HepG2 (cell line): ENCODE measurements at regions of chr14 and their contacts with region 1.

Region 1: DNA sequence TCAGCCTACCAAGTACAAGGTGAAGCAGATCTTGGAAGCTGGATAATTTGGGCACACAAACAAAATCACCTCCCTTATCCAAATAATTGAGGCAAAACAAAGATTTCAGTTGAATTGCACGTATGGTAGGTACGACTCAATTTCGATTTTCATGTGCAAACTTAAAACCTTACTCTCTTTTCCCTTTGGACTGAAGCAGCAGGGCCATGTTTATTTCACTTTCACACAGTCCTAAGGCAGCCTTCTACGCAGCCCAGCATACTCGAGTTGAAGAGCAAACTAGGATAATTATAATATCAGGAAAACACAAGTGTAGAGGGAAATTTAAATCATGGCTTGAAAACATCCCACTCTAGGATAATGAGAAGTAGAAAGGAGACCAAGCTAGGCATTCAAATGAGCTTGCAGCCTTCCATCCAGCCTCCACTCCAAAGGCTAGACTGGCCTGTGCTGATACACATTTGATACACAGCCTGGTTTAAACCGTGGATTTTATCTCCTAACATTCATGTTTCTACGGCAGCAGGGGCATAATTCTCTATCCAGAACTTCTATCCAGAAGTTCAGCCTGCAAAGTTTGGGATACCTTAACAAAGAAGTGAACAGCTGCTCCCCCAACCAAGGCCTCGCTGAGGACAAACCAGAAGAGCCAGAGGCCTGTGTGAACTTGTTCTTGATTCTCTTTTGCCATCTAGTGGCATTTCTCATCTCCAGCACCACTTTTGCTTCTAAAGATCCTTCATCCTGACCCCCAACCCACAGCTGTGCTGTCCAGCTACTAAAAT is 2.4 kb upstream of the RNASE7 start:
- DNase-seq: peak; percentile 85
- ATAC-seq: peak; percentile 78
- H3K4me3 ChIP-seq: peak overlapping the region in 2 of 3 experiments; percentile 20 to 42; a peak in 4 of 6 replicates
- H3K27ac ChIP-seq: peak overlapping the region; percentile 22
- H3K4me1 ChIP-seq: peaks cover 76% of the 10 kb centered on the region
- H3K27me3 ChIP-seq: no peaks in the 10 kb centered on the region; a peak in 1 of 5 replicates
- CTCF ChIP-seq: peak; percentile 93
- EP300 ChIP-seq: no peak
- POLR2A ChIP-seq: no peak
- RAD21 ChIP-seq: peak; percentile 92

Region 2: GRCh38 chr14:20305265-20306078 is 734.3 kb before region 1 on chr14 and contains the start of gene TTC5:
- CTCF ChIA-PET with region 1: no interaction called
- POLR2A ChIA-PET with region 1: no interaction called
- in situ Hi-C with region 1: no loop called
- intact Hi-C with region 1: no loop called
- DNase-seq: peak; percentile 85
- ATAC-seq: peak; percentile 93
- H3K4me3 ChIP-seq: peak within 1 kb of the TSS; percentile 70 to 85 (median 77)
- H3K27ac ChIP-seq: peak within 1 kb of the TSS; percentile 16
- H3K4me1 ChIP-seq: peaks cover 26% of the 10 kb centered on the region
- H3K27me3 ChIP-seq: no peaks in the 10 kb centered on the region; a peak in 1 of 5 replicates
- CTCF ChIP-seq: peak; percentile 95
- EP300 ChIP-seq: peak in 1 of 2 experiments; percentile 34; a peak in 1 of 4 replicates
- POLR2A ChIP-seq: peak; percentile 60 to 69
- RAD21 ChIP-seq: peak; percentile 52
- total RNA-seq, gene TTC5: 28.5 and 44.6 TPM in 2 replicates

Region 3: DNA sequence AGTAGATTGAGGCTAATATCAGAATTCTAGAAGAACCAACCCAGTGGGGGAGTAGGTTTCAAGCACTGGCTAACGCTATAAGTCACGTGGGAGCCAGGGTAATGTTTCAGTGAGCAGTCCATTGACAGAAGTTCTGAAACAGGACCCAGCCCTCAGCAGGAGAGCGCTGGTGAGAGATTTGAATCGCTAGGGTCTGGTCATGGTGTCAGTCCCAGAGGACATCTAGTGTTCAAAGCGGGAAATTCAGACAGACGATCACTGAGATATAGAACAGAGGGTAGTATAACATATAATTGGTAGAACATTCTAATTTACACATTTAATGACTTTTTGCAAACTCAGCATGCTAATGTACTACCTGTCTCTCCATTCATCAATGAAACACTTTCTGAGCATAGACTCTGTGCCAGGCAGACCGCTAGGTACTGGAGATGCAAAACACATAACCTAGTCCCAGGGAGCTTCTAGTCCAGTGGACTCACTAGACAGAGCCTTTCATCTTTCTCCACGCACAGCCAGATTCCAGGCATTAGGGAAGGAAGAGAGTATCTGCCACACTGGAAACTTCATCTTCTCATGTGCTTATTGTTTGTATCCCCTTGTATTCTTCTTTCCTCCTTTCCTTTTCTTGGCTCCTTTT is 184.0 kb before region 1 on chr14:
- CTCF ChIA-PET with region 1: interaction called, 5 read pairs
- POLR2A ChIA-PET with region 1: no interaction called
- in situ Hi-C with region 1: loop called (anchors 5 kb)
- intact Hi-C with region 1: loop called (anchors 1 kb)
- DNase-seq: peak; percentile 79
- ATAC-seq: peak; percentile 98
- H3K4me3 ChIP-seq: no peak overlapping the region
- H3K27ac ChIP-seq: no peak overlapping the region
- H3K4me1 ChIP-seq: peaks cover 9% of the 10 kb centered on the region
- H3K27me3 ChIP-seq: 0 out of 5 replicates have a peak, but pooled peaks cover 0 to 6% of the 10 kb centered on the region in 2 experiments
- CTCF ChIP-seq: peak; percentile 86
- EP300 ChIP-seq: no peak
- POLR2A ChIP-seq: no peak
- RAD21 ChIP-seq: peak; percentile 62

Region 4: GRCh38 chr14:20956376-20956976 is 83.3 kb before region 1 on chr14:
- CTCF ChIA-PET with region 1: no interaction called
- POLR2A ChIA-PET with region 1: no interaction called
- in situ Hi-C with region 1: no loop called
- intact Hi-C with region 1: no loop called
- DNase-seq: no peak
- ATAC-seq: no peak
- H3K4me3 ChIP-seq: no peak overlapping the region
- H3K27ac ChIP-seq: no peak overlapping the region
- H3K4me1 ChIP-seq: peaks cover 34% of the 10 kb centered on the region
- H3K27me3 ChIP-seq: no peaks in the 10 kb centered on the region
- CTCF ChIP-seq: no peak
- EP300 ChIP-seq: no peak
- POLR2A ChIP-seq: no peak
- RAD21 ChIP-seq: no peak

Region 5: DNA sequence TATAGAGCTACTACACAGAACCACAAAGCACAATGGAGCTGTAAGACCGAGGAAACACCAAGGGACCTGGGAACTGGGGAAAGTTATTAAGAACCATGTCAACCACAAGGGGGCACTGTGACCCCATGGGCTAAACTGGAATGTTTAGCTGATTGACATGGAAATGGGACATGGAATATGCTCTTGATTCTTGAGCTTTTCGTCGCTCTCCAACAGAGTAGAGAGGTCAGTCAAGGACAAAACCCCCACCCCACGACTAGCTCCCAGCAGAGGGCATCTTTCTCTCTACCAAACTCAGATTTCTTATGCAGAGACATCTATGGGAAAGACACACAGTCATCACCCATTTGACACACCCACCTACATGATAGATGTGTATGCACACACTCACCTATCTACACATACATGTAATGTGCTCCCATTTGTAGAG is 25.0 kb before region 1 on chr14:
- CTCF ChIA-PET with region 1: interaction called, 109 read pairs
- POLR2A ChIA-PET with region 1: interaction called, 112 read pairs
- in situ Hi-C with region 1: no loop called
- intact Hi-C with region 1: loop called (anchors 1 kb)
- DNase-seq: peak; percentile 94
- ATAC-seq: peak; percentile 90
- H3K4me3 ChIP-seq: no peak overlapping the region
- H3K27ac ChIP-seq: no peak overlapping the region
- H3K4me1 ChIP-seq: peaks cover 36% of the 10 kb centered on the region
- H3K27me3 ChIP-seq: peaks cover 0 to 3% of the 10 kb centered on the region in 2 experiments; a peak in 1 of 5 replicates
- CTCF ChIP-seq: peak; percentile 99
- EP300 ChIP-seq: peak in 1 of 2 experiments; percentile 40; a peak in 1 of 4 replicates
- POLR2A ChIP-seq: 0 out of 4 replicates have a peak, but pooled peaks of 1 of the 2 experiments have one; percentile 23
- RAD21 ChIP-seq: peak; percentile 99

Region 6: GRCh38 chr14:21024585-21025370 is 15.0 kb before region 1 on chr14 and contains the start of gene NDRG2:
- CTCF ChIA-PET with region 1: interaction called, 5 read pairs
- POLR2A ChIA-PET with region 1: interaction called, 26 read pairs
- in situ Hi-C with region 1: no loop called
- intact Hi-C with region 1: no loop called
- DNase-seq: peak; percentile 84
- ATAC-seq: peak; percentile 90
- H3K4me3 ChIP-seq: peak within 1 kb of the TSS; percentile 65 to 96 (median 94)
- H3K27ac ChIP-seq: peak within 1 kb of the TSS; percentile 83
- H3K4me1 ChIP-seq: peaks cover 50% of the 10 kb centered on the region
- H3K27me3 ChIP-seq: no peaks in the 10 kb centered on the region; a peak in 1 of 5 replicates
- CTCF ChIP-seq: peak; percentile 7; the same call in 1 of the 2 replicates
- EP300 ChIP-seq: peak; percentile 41 to 77; a peak in 3 of 4 replicates
- POLR2A ChIP-seq: peak; percentile 78 to 80
- RAD21 ChIP-seq: peak; percentile 58
- total RNA-seq, gene NDRG2: 27.2 and 27.4 TPM in 2 replicates

Region 7: GRCh38 chr14:21057803-21058675 is 18.3 kb after region 1 on chr14 and contains the start of gene RNASE8:
- CTCF ChIA-PET with region 1: interaction called, 4 read pairs
- POLR2A ChIA-PET with region 1: interaction called, 26 read pairs
- in situ Hi-C with region 1: no loop called
- intact Hi-C with region 1: loop called (anchors 2 kb)
- DNase-seq: no peak
- ATAC-seq: no peak
- H3K4me3 ChIP-seq: no peak within 1 kb of the TSS; a peak in 1 of 6 replicates
- H3K27ac ChIP-seq: peak within 1 kb of the TSS; percentile 92
- H3K4me1 ChIP-seq: peaks cover 99% of the 10 kb centered on the region
- H3K27me3 ChIP-seq: no peaks in the 10 kb centered on the region
- CTCF ChIP-seq: peak; percentile 56
- EP300 ChIP-seq: no peak
- POLR2A ChIP-seq: no peak
- RAD21 ChIP-seq: no peak
- total RNA-seq, gene RNASE8: not detected in 2 replicates

Region 8: GRCh38 chr14:21092273-21093011 is 52.7 kb after region 1 on chr14:
- CTCF ChIA-PET with region 1: interaction called, 14 read pairs
- POLR2A ChIA-PET with region 1: interaction called, 6 read pairs
- in situ Hi-C with region 1: no loop called
- intact Hi-C with region 1: no loop called
- DNase-seq: peak; percentile 72
- ATAC-seq: peak; percentile 68
- H3K4me3 ChIP-seq: no peak overlapping the region
- H3K27ac ChIP-seq: peak overlapping the region; percentile 1
- H3K4me1 ChIP-seq: peaks cover 38% of the 10 kb centered on the region
- H3K27me3 ChIP-seq: no peaks in the 10 kb centered on the region; a peak in 1 of 5 replicates
- CTCF ChIP-seq: peak; percentile 100
- EP300 ChIP-seq: peak in 1 of 2 experiments; percentile 70; a peak in 1 of 4 replicates
- POLR2A ChIP-seq: no peak
- RAD21 ChIP-seq: peak; percentile 100

Region 9: GRCh38 chr14:21103710-21104447 is 64.1 kb after region 1 on chr14:
- CTCF ChIA-PET with region 1: interaction called, 3 read pairs
- POLR2A ChIA-PET with region 1: interaction called, 15 read pairs
- in situ Hi-C with region 1: no loop called
- intact Hi-C with region 1: no loop called
- DNase-seq: peak; percentile 98
- ATAC-seq: peak; percentile 83
- H3K4me3 ChIP-seq: peak overlapping the region; percentile 61 to 82 (median 66)
- H3K27ac ChIP-seq: peak overlapping the region; percentile 97
- H3K4me1 ChIP-seq: peaks cover 80% of the 10 kb centered on the region
- H3K27me3 ChIP-seq: no peaks in the 10 kb centered on the region; a peak in 1 of 5 replicates
- CTCF ChIP-seq: peak; percentile 95
- EP300 ChIP-seq: peak in 1 of 2 experiments; percentile 76; a peak in 2 of 4 replicates
- POLR2A ChIP-seq: peak in 1 of 2 experiments; percentile 95; a peak in 2 of 4 replicates
- RAD21 ChIP-seq: peak; percentile 74